CD8-positive, alpha-beta T cell (primary cell): ENCODE measurements at regions of chr2 and their contacts with region 1.

Region 1: DNA sequence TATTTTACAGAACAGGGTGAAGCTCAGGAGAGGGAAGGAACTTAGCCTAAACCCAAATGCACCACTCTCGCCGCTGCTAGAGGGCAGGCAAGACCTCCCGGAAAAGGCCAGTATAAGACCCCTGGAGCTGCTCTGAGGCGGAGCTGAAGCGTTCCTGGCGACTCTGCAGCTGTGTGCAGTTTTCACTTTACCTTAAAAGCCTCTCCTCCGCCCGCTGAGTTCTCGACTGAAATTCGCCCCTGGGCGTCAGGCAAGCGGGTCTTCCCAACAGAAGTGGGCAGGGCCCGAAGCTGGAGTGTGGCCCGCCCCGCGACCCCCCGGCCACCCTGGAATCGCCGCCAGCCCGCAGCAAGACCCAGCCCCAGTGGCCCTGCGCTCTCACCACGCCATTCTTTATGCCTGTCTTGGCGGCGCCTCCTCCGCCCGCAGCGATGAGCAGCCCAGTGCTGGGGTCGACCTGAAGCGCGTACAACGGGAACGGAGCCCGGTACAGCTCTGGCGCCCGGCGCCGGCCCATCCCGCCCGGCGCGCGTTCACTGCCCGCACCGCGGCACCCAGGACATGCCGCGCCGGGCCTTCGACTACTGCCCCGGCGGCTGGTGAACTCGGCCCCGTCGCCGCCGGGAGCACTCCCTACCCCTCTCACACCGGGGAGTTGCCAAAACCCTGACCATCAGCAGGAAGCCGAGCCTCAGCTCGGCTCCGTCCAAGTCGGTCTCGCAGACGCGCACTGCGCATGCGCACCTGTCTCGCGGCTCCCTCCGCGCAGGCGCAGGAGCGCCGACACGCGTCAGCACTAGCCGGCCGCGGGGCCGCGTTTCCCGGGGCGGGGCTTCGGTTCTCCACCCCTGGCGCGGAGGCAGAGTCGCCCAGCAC is at the start of gene PREB:
- DNase-seq: peak; percentile 96 to 99 (median 98)
- ATAC-seq: peak; percentile 97
- H3K4me3 ChIP-seq: peak within 1 kb of the TSS; percentile 86 to 99
- H3K4me3 Mint-ChIP-seq: peak within 1 kb of the TSS; percentile 95
- H3K27ac ChIP-seq: peak within 1 kb of the TSS; percentile 78 to 92
- H3K27ac Mint-ChIP-seq: peak within 1 kb of the TSS; percentile 97
- H3K4me1 ChIP-seq: peaks cover 14% of the 10 kb centered on the region
- H3K4me1 Mint-ChIP-seq: peaks cover 18% of the 10 kb centered on the region
- H3K27me3 ChIP-seq: no peaks in the 10 kb centered on the region
- H3K27me3 Mint-ChIP-seq: no peaks in the 10 kb centered on the region
- CTCF ChIP-seq: no peak
- total RNA-seq, gene PREB: 9.0 to 10.1 TPM

Region 2: GRCh38 chr2:26785431-26786206 is 348.5 kb before region 1 on chr2 and contains the start of gene CENPA:
- CTCF ChIA-PET with region 1: no interaction called
- POLR2A ChIA-PET with region 1: no interaction called
- intact Hi-C with region 1: loop called (anchors 10 kb)
- DNase-seq: peak; percentile 92 to 99 (median 94)
- ATAC-seq: peak; percentile 99
- H3K4me3 ChIP-seq: peak within 1 kb of the TSS; percentile 52 to 63
- H3K4me3 Mint-ChIP-seq: peak within 1 kb of the TSS; percentile 84
- H3K27ac ChIP-seq: peak within 1 kb of the TSS; percentile 58 to 61
- H3K27ac Mint-ChIP-seq: peak within 1 kb of the TSS; percentile 88
- H3K4me1 ChIP-seq: peaks cover 16% of the 10 kb centered on the region
- H3K4me1 Mint-ChIP-seq: peaks cover 12% of the 10 kb centered on the region
- H3K27me3 ChIP-seq: no peaks in the 10 kb centered on the region
- H3K27me3 Mint-ChIP-seq: peaks cover 11% of the 10 kb centered on the region
- CTCF ChIP-seq: no peak
- total RNA-seq, gene CENPA: 0.39 to 0.62 TPM

Region 3: DNA sequence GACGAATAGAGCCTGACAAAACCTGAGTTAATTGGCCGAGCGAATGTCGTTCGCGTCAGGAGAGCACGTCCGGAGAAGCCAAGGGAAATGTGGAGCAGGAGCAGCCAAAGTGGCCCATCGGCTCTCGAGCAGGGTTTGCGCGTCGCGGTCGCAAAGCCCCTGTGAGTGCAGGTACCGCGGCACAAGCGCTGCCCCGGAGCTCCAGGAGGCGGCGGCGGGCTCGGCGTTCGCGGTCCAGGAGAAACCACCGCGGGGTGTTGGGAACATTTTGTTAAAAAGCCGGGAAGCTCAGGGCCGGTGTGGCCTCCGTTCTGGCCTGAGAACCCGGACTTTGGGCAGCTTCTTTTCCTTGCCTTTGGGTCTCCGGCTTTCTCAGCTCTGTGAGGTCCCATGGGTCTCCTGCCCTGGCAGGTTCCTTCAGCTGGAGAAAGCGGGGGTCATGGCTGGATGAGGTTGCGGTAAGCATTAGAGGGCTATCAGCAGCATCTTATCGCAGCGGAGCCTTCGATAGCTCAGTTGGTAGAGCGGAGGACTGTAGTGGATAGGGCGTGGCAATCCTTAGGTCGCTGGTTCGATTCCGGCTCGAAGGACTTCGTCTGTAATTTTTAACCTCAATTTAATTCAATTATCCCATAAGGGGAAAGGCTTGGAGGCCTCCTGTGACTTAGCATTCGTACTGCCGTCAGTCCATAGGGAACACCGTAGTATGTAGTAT is 83.7 kb before region 1 on chr2:
- CTCF ChIA-PET with region 1: no interaction called
- POLR2A ChIA-PET with region 1: interaction called, 6 read pairs
- intact Hi-C with region 1: loop called in 1 of 2 experiments (anchors 1 kb)
- DNase-seq: peak; percentile 85 to 97 (median 93)
- ATAC-seq: peak; percentile 64
- H3K4me3 ChIP-seq: peak overlapping the region; percentile 78 to 83
- H3K4me3 Mint-ChIP-seq: peak overlapping the region; percentile 99
- H3K27ac ChIP-seq: peak overlapping the region; percentile 74 to 88
- H3K27ac Mint-ChIP-seq: peak overlapping the region; percentile 99
- H3K4me1 ChIP-seq: peaks cover 10% of the 10 kb centered on the region
- H3K4me1 Mint-ChIP-seq: peaks cover 9% of the 10 kb centered on the region
- H3K27me3 ChIP-seq: no peaks in the 10 kb centered on the region
- H3K27me3 Mint-ChIP-seq: peaks cover 2% of the 10 kb centered on the region
- CTCF ChIP-seq: peak; percentile 28

Region 4: DNA sequence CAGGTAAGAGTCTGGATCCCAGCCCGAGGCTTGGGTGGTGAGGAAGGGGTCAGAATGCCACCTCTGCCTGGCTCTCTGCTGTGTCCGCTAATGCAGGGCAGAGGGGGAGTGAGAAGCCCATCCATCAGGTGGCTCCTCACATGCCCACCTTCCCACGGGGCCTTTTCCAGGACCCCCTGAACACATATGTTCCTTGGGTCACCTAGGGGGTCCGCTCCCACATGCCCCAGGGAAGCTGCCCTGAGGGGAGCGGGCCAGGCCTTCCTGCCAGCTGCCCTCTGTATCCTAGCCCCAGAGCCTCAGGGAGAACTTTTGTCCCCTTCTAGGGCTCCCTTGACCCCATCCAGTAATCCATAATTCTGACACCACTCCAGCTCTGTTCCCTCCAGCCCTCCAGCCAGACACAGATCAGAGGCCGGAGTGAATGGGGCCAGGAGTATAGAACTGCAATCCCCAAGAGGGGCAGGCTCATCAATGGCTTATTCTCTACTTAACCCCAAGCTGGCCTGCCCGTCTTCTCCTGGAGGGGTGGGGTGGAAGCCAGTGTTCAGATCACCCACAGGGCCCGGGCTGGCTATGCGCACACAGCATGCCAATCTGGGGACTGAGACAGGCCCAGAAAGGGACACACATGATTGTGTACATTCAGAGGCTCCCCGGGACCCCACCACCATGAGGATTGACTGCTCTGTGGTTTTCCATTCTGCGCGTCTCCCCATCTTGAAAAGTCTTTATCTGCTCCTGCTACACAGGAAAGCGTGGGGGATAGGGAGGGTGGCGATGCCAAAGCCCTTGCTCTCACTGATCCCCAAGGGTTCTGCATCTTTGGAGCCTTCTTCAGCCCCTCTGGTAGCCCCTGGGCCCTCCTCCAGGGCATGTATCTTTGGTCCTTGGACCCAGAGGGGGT is 54.7 kb before region 1 on chr2:
- CTCF ChIA-PET with region 1: interaction called, 3 read pairs
- POLR2A ChIA-PET with region 1: interaction called, 3 read pairs
- intact Hi-C with region 1: loop called in 1 of 2 experiments (anchors 1 kb)
- DNase-seq: no peak
- ATAC-seq: no peak
- H3K4me3 ChIP-seq: no peak overlapping the region
- H3K4me3 Mint-ChIP-seq: no peak overlapping the region
- H3K27ac ChIP-seq: no peak overlapping the region
- H3K27ac Mint-ChIP-seq: no peak overlapping the region
- H3K4me1 ChIP-seq: peaks cover 37% of the 10 kb centered on the region
- H3K4me1 Mint-ChIP-seq: peaks cover 34% of the 10 kb centered on the region
- H3K27me3 ChIP-seq: no peaks in the 10 kb centered on the region
- H3K27me3 Mint-ChIP-seq: no peaks in the 10 kb centered on the region
- CTCF ChIP-seq: no peak

Region 5: DNA sequence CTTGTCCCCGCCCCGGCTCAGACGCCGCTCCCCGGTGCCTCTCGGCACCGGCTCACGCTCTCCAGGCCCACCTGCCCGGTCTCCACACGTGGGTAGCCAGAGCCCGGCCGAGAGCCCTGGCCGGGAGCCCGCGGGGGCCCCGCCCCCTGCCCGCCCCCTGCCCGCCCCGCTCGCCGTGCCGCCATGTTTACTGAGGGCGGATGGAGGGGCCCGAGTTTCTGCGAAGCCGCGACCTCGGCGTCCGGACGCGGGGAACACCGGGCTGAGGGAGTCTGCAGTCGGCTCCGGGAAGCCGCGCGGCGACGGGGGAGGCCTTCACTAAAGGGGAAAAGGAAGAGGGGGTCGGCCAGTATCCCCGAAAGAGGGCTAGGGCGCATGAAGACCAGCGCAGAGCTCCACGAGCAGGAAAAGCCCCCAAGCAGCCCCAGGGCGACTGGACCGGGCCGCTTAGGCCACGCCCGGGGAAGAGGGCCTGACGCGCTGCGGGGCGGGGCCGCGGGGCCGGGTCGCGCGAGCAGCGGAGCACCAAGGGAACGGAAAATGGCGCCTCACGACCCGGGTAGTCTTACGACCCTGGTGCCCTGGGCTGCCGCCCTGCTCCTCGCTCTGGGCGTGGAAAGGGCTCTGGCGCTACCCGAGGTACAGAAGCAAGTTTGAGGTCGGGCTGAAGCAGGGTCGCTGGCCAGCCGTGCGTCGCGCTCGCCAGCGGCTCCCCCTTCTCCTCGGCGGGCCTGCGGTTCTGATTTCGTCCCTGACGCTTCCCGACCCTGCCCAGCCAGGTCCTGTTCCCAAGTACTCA is 77.9 kb after region 1 on chr2 and contains the starts of genes ATRAID and SLC5A6:
- CTCF ChIA-PET with region 1: no interaction called
- POLR2A ChIA-PET with region 1: no interaction called
- intact Hi-C with region 1: loop called (anchors 1 kb)
- DNase-seq: peak; percentile 78 to 94 (median 87)
- ATAC-seq: peak; percentile 84
- H3K4me3 ChIP-seq: peak within 1 kb of the TSS; percentile 67 to 99
- H3K4me3 Mint-ChIP-seq: peak within 1 kb of the TSS; percentile 100
- H3K27ac ChIP-seq: peak within 1 kb of the TSS; percentile 97 to 100
- H3K27ac Mint-ChIP-seq: peak within 1 kb of the TSS; percentile 100
- H3K4me1 ChIP-seq: peaks cover 26% of the 10 kb centered on the region
- H3K4me1 Mint-ChIP-seq: peaks cover 44% of the 10 kb centered on the region
- H3K27me3 ChIP-seq: no peaks in the 10 kb centered on the region
- H3K27me3 Mint-ChIP-seq: no peaks in the 10 kb centered on the region
- CTCF ChIP-seq: no peak
- total RNA-seq, gene ATRAID: 70.0 to 71.7 TPM
- total RNA-seq, gene SLC5A6: 410 to 431 TPM

Region 6: DNA sequence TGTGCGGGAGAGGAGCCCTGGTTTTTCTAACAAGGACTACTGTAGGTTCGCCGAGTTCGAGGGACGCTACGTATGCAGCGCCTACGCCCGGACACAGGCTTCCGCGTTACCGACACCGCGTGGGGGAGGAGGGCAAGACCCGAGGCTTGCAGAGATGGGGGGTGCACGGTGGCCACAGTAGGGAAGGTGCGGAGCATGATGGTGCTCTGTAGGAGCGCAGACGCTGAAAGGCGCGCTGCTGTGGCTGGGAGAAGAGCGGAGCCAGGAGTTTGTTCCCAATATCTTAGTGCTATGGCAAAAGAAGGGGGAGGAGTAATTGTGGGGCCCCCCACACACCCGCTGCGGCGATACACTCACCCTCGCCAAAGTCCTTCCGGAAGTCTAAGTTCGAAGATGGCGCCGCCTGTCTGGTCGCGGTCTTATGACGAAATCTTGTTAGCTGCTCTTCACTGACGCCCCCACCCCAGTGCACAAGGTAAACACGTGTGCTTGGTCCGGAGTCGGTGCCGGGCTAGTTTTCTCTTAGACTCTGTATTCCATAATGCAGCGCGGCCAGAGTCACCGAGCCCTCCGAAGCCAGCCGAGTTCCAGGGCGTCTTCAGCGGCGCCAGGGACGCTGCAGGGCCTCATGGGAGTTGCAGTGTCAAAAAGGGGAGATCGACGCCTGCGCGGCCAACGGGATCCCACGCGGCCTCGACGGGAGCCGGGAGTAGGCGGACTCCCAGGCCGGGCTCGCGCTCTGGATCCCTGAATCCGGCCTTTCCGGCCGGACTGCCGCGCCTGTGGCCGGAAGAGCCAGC is 222.4 kb after region 1 on chr2 and contains the start of gene GTF3C2:
- CTCF ChIA-PET with region 1: no interaction called
- POLR2A ChIA-PET with region 1: no interaction called
- intact Hi-C with region 1: loop called in 1 of 2 experiments (anchors 2 kb)
- DNase-seq: peak; percentile 82 to 97 (median 93)
- ATAC-seq: peak; percentile 76
- H3K4me3 ChIP-seq: peak within 1 kb of the TSS; percentile 94 to 95
- H3K4me3 Mint-ChIP-seq: peak within 1 kb of the TSS; percentile 98
- H3K27ac ChIP-seq: peak within 1 kb of the TSS; percentile 87 to 95
- H3K27ac Mint-ChIP-seq: peak within 1 kb of the TSS; percentile 99
- H3K4me1 ChIP-seq: peaks cover 35% of the 10 kb centered on the region
- H3K4me1 Mint-ChIP-seq: peaks cover 51% of the 10 kb centered on the region
- H3K27me3 ChIP-seq: no peaks in the 10 kb centered on the region
- H3K27me3 Mint-ChIP-seq: no peaks in the 10 kb centered on the region
- CTCF ChIP-seq: no peak
- total RNA-seq, gene GTF3C2: 52.2 to 56.2 TPM